Dorsolateral prefrontal cortex (tissue), 120 donors: ENCODE measurements at regions of chr3 and their contacts with region 1.

Region 1: DNA sequence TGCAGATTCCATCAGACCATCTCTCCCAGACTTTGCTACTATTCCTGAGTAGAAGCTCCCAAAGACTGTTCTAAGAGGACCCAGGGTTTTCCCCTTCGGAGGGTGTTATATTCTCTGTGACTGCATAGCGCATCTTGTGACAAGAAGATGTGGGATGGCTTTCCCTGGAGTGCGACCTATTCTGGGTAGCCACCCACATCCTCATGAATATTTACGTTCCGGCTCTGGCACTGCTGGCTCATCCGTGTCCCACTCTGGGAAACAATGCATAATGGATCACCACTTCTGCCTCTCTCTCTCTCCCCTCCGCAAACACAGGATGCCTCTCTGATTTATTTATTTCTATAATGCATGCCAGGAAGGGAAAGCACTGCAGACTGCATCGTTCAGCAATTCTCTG is 166.1 kb downstream of the PYDC2 start:
- DNase-seq: peak in 8 of 10 donors; percentile 48 to 76 (median 62)
- H3K4me3 ChIP-seq: peak overlapping the region in 49 of 59 donors; percentile 2 to 53 (median 29)
- H3K27ac ChIP-seq: peak overlapping the region in 47 of 59 donors; percentile 1 to 76 (median 35)
- H3K27me3 ChIP-seq: no peaks in the 10 kb centered on the region
- CTCF ChIP-seq: no peak

Region 2: DNA sequence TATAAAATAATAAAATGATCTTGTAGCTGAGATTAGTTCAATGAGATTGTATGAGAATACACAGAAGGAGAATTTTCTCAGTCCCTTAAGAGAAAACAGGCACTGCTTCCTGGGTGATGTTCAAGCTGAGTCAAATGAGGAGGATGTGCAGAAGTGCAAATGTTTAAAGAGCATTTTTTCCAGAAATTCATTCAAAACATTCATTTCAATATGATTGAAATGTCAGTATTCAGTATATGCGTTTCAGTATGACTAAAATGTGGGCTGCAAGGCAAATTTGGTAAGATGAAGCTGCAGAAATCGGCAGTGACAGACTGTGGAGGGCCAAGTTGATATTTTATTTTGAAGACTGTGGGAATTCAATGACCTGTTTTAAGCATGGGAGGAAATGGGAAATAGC is 185.4 kb before region 1 on chr3:
- intact Hi-C with region 1: loop called in 1 of 2 experiments (anchors 5 kb)
- DNase-seq: peak in 1 of 10 donors; percentile 17
- H3K4me3 ChIP-seq: no peak overlapping the region
- H3K27ac ChIP-seq: peak overlapping the region in 37 of 59 donors; percentile 1 to 76 (median 44)
- H3K27me3 ChIP-seq: no peaks in the 10 kb centered on the region
- CTCF ChIP-seq: no peak